OCI-LY7 (cell line): ENCODE measurements at regions of chr17 and their contacts with region 1.

Region 1: GRCh38 chr17:47229535-47230443 is 20.6 kb downstream of the MYL4 start:
- DNase-seq: peak; percentile 89
- H3K4me3 ChIP-seq: peak overlapping the region; percentile 58
- H3K27ac ChIP-seq: no peak overlapping the region
- H3K4me1 ChIP-seq: peaks cover 27% of the 10 kb centered on the region
- CTCF ChIP-seq: peak; percentile 97

Region 2: DNA sequence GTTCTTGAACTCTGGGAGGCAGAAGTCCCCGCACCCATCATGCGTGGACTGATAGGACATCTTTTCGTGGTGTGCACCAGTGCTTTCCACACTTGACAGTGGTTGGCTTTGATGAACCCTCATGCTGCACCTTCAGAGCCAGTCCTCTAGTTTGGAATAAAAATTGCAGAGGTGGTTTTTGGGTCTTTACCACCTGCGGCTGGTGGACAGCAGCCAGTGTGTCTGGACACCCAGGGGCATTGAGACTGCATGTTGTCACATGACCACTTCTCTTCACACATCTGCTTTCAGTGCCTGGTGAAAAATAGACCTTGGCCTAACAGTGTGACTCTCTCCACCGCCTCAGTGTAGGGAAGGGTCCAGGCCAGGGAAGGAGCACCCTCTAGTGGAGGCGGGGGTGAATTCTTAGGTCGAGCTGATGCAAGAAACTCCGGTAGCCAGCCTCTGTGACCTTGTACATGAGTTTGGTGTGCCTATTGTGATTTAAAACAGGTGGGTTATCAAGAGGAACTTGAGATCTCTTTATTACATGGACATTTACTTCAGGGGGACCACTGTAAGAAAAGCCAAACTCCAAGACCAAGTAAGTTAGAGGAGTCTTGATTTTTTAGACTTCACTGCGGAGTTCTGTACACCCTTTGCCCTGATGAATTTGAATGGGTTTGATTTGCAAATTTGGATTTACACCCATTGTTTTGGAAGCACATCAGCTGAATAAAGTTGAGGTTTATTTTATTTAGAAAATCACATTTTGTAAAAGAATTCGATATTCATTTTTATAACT is 289.0 kb before region 1 on chr17:
- CTCF ChIA-PET with region 1: no interaction called
- POLR2A ChIA-PET with region 1: no interaction called
- intact Hi-C with region 1: loop called (anchors 10 kb)
- DNase-seq: peak; percentile 86
- H3K4me3 ChIP-seq: no peak overlapping the region
- H3K27ac ChIP-seq: no peak overlapping the region
- H3K4me1 ChIP-seq: peaks cover 10% of the 10 kb centered on the region
- CTCF ChIP-seq: peak; percentile 87

Region 3: GRCh38 chr17:47087093-47087492 is 142.7 kb before region 1 on chr17:
- CTCF ChIA-PET with region 1: no interaction called
- POLR2A ChIA-PET with region 1: no interaction called
- intact Hi-C with region 1: no loop called
- DNase-seq: no peak
- H3K4me3 ChIP-seq: no peak overlapping the region
- H3K27ac ChIP-seq: no peak overlapping the region
- H3K4me1 ChIP-seq: no peaks in the 10 kb centered on the region
- CTCF ChIP-seq: no peak

Region 4: GRCh38 chr17:47615766-47616424 is 386.1 kb after region 1 on chr17:
- CTCF ChIA-PET with region 1: no interaction called
- POLR2A ChIA-PET with region 1: no interaction called
- intact Hi-C with region 1: loop called (anchors 5 kb)
- DNase-seq: peak; percentile 72
- H3K4me3 ChIP-seq: no peak overlapping the region
- H3K27ac ChIP-seq: no peak overlapping the region
- H3K4me1 ChIP-seq: no peaks in the 10 kb centered on the region
- CTCF ChIP-seq: peak; percentile 96